Mammary epithelial cell (primary cell): ENCODE measurements at regions of chr17 and their contacts with region 1.

Region 1: GRCh38 chr17:1716076-1716995 is 6.2 kb upstream of the TLCD2 start:
- DNase-seq: peak; percentile 100
- H3K4me3 ChIP-seq: peak overlapping the region; percentile 72 to 97 (median 78)
- H3K27ac ChIP-seq: peak overlapping the region; percentile 90
- H3K4me1 ChIP-seq: peaks cover 45% of the 10 kb centered on the region
- H3K27me3 ChIP-seq: no peaks in the 10 kb centered on the region
- CTCF ChIP-seq: peak in 1 of 2 donors; percentile 32

Region 2: DNA sequence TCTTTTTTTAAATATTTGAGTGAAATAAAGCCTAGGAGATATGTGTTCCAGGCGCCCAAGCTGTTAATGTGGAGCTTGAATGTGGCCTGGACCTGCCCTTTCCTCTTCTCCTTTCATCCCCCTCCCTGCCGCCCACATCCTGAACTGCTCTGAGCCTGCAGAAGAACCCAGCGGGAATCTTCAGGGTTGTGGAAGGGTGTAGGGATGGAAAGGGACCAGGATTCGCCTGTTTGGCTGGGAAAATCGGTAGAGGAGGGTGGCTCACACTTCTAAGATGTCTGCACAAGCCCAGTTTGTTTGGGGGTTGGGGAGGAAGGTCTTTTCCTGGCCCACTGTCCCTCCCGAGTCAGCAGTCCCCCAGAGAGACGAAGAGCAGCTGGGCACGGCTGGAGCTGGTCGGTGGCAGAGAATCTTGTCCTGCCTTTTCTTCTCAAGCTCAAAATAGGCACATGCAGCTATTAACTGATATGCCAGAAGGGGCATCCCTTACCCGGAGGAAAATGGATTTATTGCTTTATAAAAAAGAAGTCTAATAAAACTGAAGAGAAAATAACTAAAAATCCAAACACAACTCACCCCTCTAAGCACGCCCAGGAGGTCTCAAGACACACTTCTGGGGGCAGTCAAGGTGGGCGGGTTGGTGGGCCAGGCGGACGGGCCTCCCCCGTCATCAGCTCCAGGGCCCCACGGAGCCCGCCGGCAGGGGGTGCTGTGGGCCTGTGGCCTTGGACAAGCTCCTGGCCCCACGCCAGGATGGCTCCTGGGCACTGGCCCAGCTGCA is 142.2 kb before region 1 on chr17:
- CTCF ChIA-PET with region 1: no interaction called
- dilution Hi-C with region 1: no loop called
- in situ Hi-C with region 1: no loop called
- intact Hi-C with region 1: loop called (anchors 5 kb)
- DNase-seq: peak; percentile 63
- H3K4me3 ChIP-seq: no peak overlapping the region
- H3K27ac ChIP-seq: no peak overlapping the region
- H3K4me1 ChIP-seq: peaks cover 33% of the 10 kb centered on the region
- H3K27me3 ChIP-seq: no peaks in the 10 kb centered on the region
- CTCF ChIP-seq: peak; percentile 82 to 97

Region 3: GRCh38 chr17:1673041-1673785 is 43.1 kb before region 1 on chr17:
- CTCF ChIA-PET with region 1: no interaction called
- dilution Hi-C with region 1: loop called (anchors 5 kb)
- in situ Hi-C with region 1: no loop called
- intact Hi-C with region 1: loop called (anchors 2 kb)
- DNase-seq: no peak
- H3K4me3 ChIP-seq: no peak overlapping the region
- H3K27ac ChIP-seq: no peak overlapping the region
- H3K4me1 ChIP-seq: no peaks in the 10 kb centered on the region
- H3K27me3 ChIP-seq: no peaks in the 10 kb centered on the region
- CTCF ChIP-seq: no peak

Region 4: GRCh38 chr17:1783834-1784611 is 67.7 kb after region 1 on chr17:
- CTCF ChIA-PET with region 1: interaction called, 10 read pairs
- dilution Hi-C with region 1: no loop called
- in situ Hi-C with region 1: loop called (anchors 5 kb)
- intact Hi-C with region 1: loop called (anchors 1 kb)
- DNase-seq: peak; percentile 46
- H3K4me3 ChIP-seq: no peak overlapping the region
- H3K27ac ChIP-seq: peak overlapping the region; percentile 17
- H3K4me1 ChIP-seq: peaks cover 37% of the 10 kb centered on the region
- H3K27me3 ChIP-seq: no peaks in the 10 kb centered on the region
- CTCF ChIP-seq: peak; percentile 72 to 81

Region 5: GRCh38 chr17:1865252-1866037 is 149.1 kb after region 1 on chr17:
- CTCF ChIA-PET with region 1: interaction called, 6 read pairs
- dilution Hi-C with region 1: no loop called
- in situ Hi-C with region 1: loop called in 1 of 2 experiments (anchors 25 kb)
- intact Hi-C with region 1: loop called (anchors 1 kb)
- DNase-seq: peak; percentile 35
- H3K4me3 ChIP-seq: no peak overlapping the region
- H3K27ac ChIP-seq: no peak overlapping the region
- H3K4me1 ChIP-seq: no peaks in the 10 kb centered on the region
- H3K27me3 ChIP-seq: no peaks in the 10 kb centered on the region
- CTCF ChIP-seq: peak; percentile 65 to 73

Region 6: GRCh38 chr17:2041561-2042366 is 325.4 kb after region 1 on chr17 and contains the start of gene OVCA2:
- CTCF ChIA-PET with region 1: no interaction called
- dilution Hi-C with region 1: no loop called
- in situ Hi-C with region 1: loop called in 1 of 2 experiments (anchors 25 kb)
- intact Hi-C with region 1: no loop called
- DNase-seq: peak; percentile 92
- H3K4me3 ChIP-seq: peak within 1 kb of the TSS; percentile 68 to 85 (median 74)
- H3K27ac ChIP-seq: peak within 1 kb of the TSS; percentile 87
- H3K4me1 ChIP-seq: peaks cover 31% of the 10 kb centered on the region
- H3K27me3 ChIP-seq: no peaks in the 10 kb centered on the region
- CTCF ChIP-seq: peak; percentile 12 to 51
- total RNA-seq, gene OVCA2: 44.1 to 65.7 TPM